Heart right ventricle (tissue), 16 donors: ENCODE measurements at regions of chr6 and their contacts with region 1.

Region 1: GRCh38 chr6:90393232-90393884 is 96.7 kb upstream of the BACH2 start:
- DNase-seq: peak in 1 of 2 donors; percentile 54
- ATAC-seq: peak in 6 of 8 donors; percentile 49 to 76 (median 63)
- H3K4me3 ChIP-seq: no peak overlapping the region
- H3K27ac ChIP-seq: no peak overlapping the region
- H3K4me1 ChIP-seq: peaks cover 0 to 4% (median 0%) of the 10 kb centered on the region in 9 donors
- H3K27me3 ChIP-seq: peaks cover 0 to 4% (median 0%) of the 10 kb centered on the region in 7 donors
- CTCF ChIP-seq: peak; percentile 68 to 88 (median 78)

Region 2: GRCh38 chr6:89970609-89971337 is 422.6 kb before region 1 on chr6:
- intact Hi-C with region 1: loop called in 9 of 10 experiments (anchors 1 to 5 kb)
- DNase-seq: peak; percentile 18 to 48
- ATAC-seq: peak; percentile 24 to 90 (median 79)
- H3K4me3 ChIP-seq: no peak overlapping the region
- H3K27ac ChIP-seq: no peak overlapping the region
- H3K4me1 ChIP-seq: peaks cover 7 to 31% (median 21%) of the 10 kb centered on the region in 9 donors
- H3K27me3 ChIP-seq: no peaks in the 10 kb centered on the region
- CTCF ChIP-seq: peak in 8 of 9 donors; percentile 20 to 80 (median 68)

Region 3: DNA sequence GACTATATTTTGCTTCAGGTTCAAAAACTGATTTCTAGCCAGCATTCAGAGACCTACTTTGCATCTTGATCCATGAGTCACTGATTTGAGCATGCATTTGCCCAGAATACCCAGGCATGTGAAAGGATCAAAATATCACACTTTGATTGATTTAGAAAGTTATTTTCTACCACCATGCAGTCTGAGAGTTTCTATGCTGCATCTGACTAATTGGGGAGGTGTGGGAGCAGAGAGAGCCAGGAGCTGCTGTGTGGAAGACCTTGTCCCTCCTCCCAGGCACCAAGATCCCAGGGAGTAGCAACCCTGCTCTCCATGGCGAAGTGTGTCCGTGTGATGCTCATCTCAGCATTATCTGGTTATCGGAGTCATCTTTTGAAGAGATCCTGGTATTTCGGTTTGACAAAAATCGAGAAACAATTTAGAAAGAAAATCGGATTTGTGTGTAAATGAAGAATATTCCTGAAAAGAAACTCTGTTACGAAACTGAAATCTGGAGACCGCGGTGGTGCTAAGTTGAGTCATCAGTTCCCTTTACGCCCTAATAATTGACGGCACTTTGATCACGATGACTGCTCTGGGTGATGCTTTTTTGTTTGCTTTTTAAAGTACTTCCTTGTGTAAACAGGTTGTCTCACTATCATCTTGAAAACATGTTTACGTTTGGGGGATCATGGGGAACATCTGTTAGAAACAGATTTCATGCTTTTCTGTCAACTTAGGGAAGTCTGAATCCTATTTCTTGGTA is 290.1 kb before region 1 on chr6:
- intact Hi-C with region 1: loop called in 5 of 10 experiments (anchors 5 to 10 kb)
- DNase-seq: no peak
- ATAC-seq: no peak
- H3K4me3 ChIP-seq: no peak overlapping the region
- H3K27ac ChIP-seq: no peak overlapping the region
- H3K4me1 ChIP-seq: peaks cover 0 to 40% (median 9%) of the 10 kb centered on the region in 9 donors
- H3K27me3 ChIP-seq: no peaks in the 10 kb centered on the region
- CTCF ChIP-seq: no peak

Region 4: DNA sequence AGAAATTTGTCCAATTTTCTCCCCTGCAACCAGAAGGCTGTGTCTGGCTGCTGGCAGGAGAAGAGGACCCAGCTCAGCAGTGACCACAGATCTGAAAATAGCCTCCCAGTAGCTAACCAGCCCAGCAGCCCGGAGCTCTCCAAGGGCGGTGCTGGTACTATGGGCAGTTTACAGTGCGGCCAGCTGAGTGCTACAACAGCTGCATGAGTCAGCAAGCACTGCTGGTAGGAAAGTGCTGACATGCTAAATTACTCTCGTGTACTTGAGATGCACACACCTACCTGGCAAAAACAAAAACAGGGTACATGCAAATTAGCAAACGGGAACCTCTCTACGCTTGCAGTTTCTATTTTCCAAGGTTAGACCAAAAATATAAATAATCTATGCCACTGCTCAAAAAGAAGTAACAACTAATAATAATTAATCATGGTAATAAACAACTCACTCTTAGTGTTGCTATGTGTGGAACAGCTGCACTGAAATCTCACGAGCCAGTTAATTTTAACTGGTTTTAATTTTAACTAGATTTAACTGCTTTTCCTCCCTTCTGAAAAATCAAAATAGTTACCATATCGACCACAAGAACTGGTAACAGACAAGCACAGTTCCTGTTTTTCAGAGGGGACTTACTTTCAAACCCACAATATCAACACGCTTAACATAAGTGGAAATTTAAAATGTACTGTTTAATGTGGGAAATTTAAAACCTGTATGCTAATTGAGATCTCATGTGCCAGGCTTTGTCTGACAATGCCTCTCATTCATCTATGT is 107.6 kb before region 1 on chr6:
- intact Hi-C with region 1: loop called in 4 of 10 experiments (anchors 5 to 10 kb)
- DNase-seq: peak; percentile 77 to 88
- ATAC-seq: peak; percentile 95 to 100 (median 98)
- H3K4me3 ChIP-seq: peak overlapping the region in 6 of 10 donors; percentile 30 to 46 (median 40)
- H3K27ac ChIP-seq: peak overlapping the region in 9 of 10 donors; percentile 3 to 76 (median 61)
- H3K4me1 ChIP-seq: peaks cover 3 to 33% (median 26%) of the 10 kb centered on the region in 9 donors
- H3K27me3 ChIP-seq: no peaks in the 10 kb centered on the region
- CTCF ChIP-seq: no peak